ENCODE measurements at regions of chr13 and their contacts with region 1.

Region 1: GRCh38 chr13:64709079-64709478 is 2521.1 kb downstream of the PCDH9 start:
- DNase-seq: no peak
- ATAC-seq: no peak
- H3K4me3 ChIP-seq: no peak overlapping the region
- H3K4me3 Mint-ChIP-seq: no peak overlapping the region
- H3K27ac ChIP-seq: no peak overlapping the region
- H3K27ac Mint-ChIP-seq: no peak overlapping the region
- H3K4me1 ChIP-seq: no peaks in the 10 kb centered on the region
- H3K4me1 Mint-ChIP-seq: no peaks in the 10 kb centered on the region
- H3K27me3 ChIP-seq: no peaks in the 10 kb centered on the region
- H3K27me3 Mint-ChIP-seq: no peaks in the 10 kb centered on the region
- CTCF ChIP-seq: no peak

Region 2: GRCh38 chr13:64256751-64257150 is 452.3 kb before region 1 on chr13:
- CTCF ChIA-PET with region 1: no interaction called
- POLR2A ChIA-PET with region 1: no interaction called
- intact Hi-C with region 1: no loop called
- DNase-seq: no peak
- ATAC-seq: no peak
- H3K4me3 ChIP-seq: no peak overlapping the region
- H3K4me3 Mint-ChIP-seq: no peak overlapping the region
- H3K27ac ChIP-seq: no peak overlapping the region
- H3K27ac Mint-ChIP-seq: no peak overlapping the region
- H3K4me1 ChIP-seq: no peaks in the 10 kb centered on the region
- H3K4me1 Mint-ChIP-seq: no peaks in the 10 kb centered on the region
- H3K27me3 ChIP-seq: no peaks in the 10 kb centered on the region
- H3K27me3 Mint-ChIP-seq: no peaks in the 10 kb centered on the region
- CTCF ChIP-seq: no peak

Region 3: DNA sequence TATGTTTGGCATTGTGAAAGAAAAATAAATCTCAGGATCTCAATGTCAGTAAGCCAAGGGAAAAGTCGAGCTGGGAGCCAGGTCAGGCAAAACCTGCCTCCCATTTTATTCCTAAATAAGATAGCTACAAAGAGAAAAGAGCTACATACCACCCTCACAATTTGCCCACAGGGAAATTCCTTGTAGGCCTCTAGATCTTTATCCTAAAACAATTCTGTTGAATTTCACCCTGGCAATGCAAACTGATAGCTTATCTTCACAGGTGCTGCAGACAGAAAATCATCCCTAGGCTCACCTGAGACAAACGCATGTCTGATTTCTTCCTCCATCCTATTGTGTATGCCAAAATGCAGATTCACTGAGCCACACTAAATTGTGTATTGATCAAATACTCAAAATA is 66.0 kb before region 1 on chr13:
- CTCF ChIA-PET with region 1: no interaction called
- POLR2A ChIA-PET with region 1: no interaction called
- intact Hi-C with region 1: no loop called
- DNase-seq: no peak
- ATAC-seq: no peak
- H3K4me3 ChIP-seq: no peak overlapping the region
- H3K4me3 Mint-ChIP-seq: no peak overlapping the region
- H3K27ac ChIP-seq: no peak overlapping the region
- H3K27ac Mint-ChIP-seq: no peak overlapping the region
- H3K4me1 ChIP-seq: no peaks in the 10 kb centered on the region
- H3K4me1 Mint-ChIP-seq: no peaks in the 10 kb centered on the region
- H3K27me3 ChIP-seq: no peaks in the 10 kb centered on the region
- H3K27me3 Mint-ChIP-seq: no peaks in the 10 kb centered on the region
- CTCF ChIP-seq: no peak

Region 4: DNA sequence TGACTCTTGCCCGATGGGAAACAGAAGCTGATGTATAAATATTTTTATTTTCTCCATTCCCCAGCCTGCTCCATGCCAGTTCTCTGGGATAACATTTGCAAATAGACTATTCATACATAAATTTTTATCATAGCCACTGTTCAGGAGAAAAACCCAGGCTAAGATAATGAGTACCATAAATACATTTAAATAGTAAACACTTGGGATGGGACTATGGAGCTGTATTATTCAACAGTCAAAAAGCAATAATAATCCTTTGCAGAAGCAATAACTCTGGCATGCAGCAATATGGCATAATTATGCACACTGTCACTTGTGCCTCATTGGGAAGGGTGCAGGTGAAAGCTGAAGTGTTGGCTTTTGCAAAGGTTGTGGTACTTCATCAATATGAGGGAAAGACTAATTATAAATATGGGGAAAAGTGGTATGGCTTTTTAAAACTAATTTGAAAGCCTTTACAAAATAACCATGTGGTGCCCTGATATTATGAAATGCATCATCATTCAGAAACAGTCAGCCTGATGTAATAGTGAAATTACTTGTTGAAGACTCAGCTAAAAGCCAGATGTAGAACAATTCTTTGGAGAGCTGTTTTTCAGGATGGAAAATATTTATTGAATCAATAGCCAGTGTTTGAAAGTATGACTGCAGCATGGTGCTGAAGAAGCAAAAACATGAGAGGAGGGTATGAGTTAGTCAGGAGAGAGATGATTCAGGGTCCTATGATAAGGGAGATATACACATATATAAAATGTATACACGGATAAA is 44.3 kb after region 1 on chr13:
- CTCF ChIA-PET with region 1: no interaction called
- POLR2A ChIA-PET with region 1: no interaction called
- intact Hi-C with region 1: loop called (anchors 1 kb)
- DNase-seq: no peak
- ATAC-seq: no peak
- H3K4me3 ChIP-seq: no peak overlapping the region
- H3K4me3 Mint-ChIP-seq: no peak overlapping the region
- H3K27ac ChIP-seq: no peak overlapping the region
- H3K27ac Mint-ChIP-seq: no peak overlapping the region
- H3K4me1 ChIP-seq: no peaks in the 10 kb centered on the region
- H3K4me1 Mint-ChIP-seq: no peaks in the 10 kb centered on the region
- H3K27me3 ChIP-seq: no peaks in the 10 kb centered on the region
- H3K27me3 Mint-ChIP-seq: no peaks in the 10 kb centered on the region
- CTCF ChIP-seq: no peak

Region 5: GRCh38 chr13:64782466-64782865 is 73.4 kb after region 1 on chr13:
- CTCF ChIA-PET with region 1: no interaction called
- POLR2A ChIA-PET with region 1: no interaction called
- intact Hi-C with region 1: no loop called
- DNase-seq: no peak
- ATAC-seq: no peak
- H3K4me3 ChIP-seq: no peak overlapping the region
- H3K4me3 Mint-ChIP-seq: no peak overlapping the region
- H3K27ac ChIP-seq: no peak overlapping the region
- H3K27ac Mint-ChIP-seq: no peak overlapping the region
- H3K4me1 ChIP-seq: no peaks in the 10 kb centered on the region
- H3K4me1 Mint-ChIP-seq: no peaks in the 10 kb centered on the region
- H3K27me3 ChIP-seq: no peaks in the 10 kb centered on the region
- H3K27me3 Mint-ChIP-seq: no peaks in the 10 kb centered on the region
- CTCF ChIP-seq: no peak

Measured in B cell (primary cell).